Caco-2 (cell line): ENCODE measurements at regions of chr6 and their contacts with region 1.

Region 1: DNA sequence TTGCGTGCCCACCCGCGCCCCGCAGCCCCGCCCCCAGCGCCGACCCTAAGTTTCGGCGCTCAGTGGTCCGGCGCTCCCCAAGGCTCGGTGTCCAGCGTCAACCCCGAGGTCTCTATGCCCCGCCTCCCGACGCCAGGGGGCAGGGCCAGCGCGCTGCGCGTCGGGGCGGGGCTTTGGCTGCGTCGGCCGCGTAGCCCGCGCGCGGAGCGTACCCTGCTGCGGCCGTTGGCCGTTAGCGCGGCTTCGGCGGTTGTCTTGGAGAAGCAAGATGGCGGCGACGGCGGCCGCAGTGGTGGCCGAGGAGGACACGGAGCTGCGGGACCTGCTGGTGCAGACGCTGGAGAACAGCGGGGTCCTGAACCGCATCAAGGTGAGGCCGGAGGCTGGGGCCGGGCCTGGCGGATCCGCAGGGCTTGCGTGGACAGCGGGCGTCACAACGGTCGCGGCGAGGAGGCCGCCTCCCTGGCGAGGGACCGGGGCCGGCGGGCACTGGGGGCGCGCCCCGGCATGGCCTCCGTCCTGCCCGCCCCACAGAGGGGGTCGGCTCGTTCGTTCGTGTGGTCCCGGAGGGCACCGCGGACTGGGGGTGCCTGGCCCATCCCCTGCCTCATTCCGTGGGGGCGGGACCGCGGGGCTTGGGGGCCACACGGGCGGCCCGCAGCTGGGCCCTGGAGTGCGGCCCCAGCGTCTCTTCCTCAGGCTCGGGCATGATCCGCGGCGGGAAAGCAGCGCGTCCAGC is at the start of gene CEP43:
- DNase-seq: peak; percentile 92 to 95
- H3K4me3 ChIP-seq: peak within 1 kb of the TSS; percentile 67
- H3K4me3 Mint-ChIP-seq: peak within 1 kb of the TSS; percentile 84
- H3K27ac Mint-ChIP-seq: peak within 1 kb of the TSS; percentile 82
- H3K4me1 ChIP-seq: peaks cover 3% of the 10 kb centered on the region; the same call in 1 of the 2 replicates
- H3K4me1 Mint-ChIP-seq: peaks cover 14% of the 10 kb centered on the region
- H3K27me3 ChIP-seq: no peaks in the 10 kb centered on the region
- H3K27me3 Mint-ChIP-seq: no peaks in the 10 kb centered on the region
- CTCF ChIP-seq: no peak
- total RNA-seq, gene CEP43: 36.3 and 37.0 TPM in 2 replicates

Region 2: DNA sequence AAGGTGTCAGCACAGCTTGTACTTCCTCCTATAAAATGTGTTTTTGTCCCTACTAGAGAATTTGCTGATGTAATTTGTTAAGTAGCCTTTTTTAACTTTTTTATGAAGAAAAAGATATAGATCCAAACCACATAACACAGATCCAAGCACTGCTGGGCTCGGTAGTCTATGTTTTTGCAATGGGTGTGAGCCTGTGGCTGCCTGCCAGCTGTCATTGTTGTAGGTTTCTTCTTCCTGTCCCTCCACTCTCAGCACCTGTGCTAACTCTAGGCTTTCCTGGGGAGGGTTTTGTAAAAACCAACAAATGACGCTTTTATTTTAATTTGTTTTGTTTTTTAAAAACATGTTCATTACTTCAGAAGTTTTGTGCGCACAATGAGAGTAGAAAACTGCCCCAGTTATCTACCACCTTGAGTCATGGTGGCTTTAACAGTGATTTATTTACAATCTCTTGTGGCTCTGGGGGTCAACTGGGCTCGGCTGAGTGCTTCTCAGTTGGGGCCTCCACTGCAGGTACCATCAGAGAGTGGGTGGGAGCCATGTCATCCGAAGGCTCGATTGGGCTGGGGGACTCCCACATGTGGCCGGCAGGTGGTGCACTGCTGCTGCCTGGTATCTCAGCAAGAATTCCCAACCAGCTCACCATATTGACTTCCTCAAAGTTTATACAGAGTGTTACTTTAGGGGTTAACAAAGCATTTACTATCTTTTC is 120.5 kb after region 1 on chr6:
- CTCF ChIA-PET with region 1: no interaction called
- POLR2A ChIA-PET with region 1: no interaction called
- intact Hi-C with region 1: loop called (anchors 5 kb)
- DNase-seq: peak; percentile 54 to 72
- H3K4me3 ChIP-seq: no peak overlapping the region
- H3K4me3 Mint-ChIP-seq: no peak overlapping the region
- H3K27ac Mint-ChIP-seq: no peak overlapping the region
- H3K4me1 ChIP-seq: peaks cover 16% of the 10 kb centered on the region
- H3K4me1 Mint-ChIP-seq: peaks cover 13% of the 10 kb centered on the region
- H3K27me3 ChIP-seq: no peaks in the 10 kb centered on the region
- H3K27me3 Mint-ChIP-seq: no peaks in the 10 kb centered on the region
- CTCF ChIP-seq: peak; percentile 60 to 92